Esophagus muscularis mucosa (tissue), 4 donors: ENCODE measurements at regions of chr17 and their contacts with region 1.

Region 1: GRCh38 chr17:9522074-9522473 is 53.5 kb downstream of the STX8 start:
- DNase-seq: no peak
- H3K4me3 ChIP-seq: no peak overlapping the region
- H3K27ac ChIP-seq: no peak overlapping the region
- H3K4me1 ChIP-seq: peaks cover 0 to 34% (median 30%) of the 10 kb centered on the region in 4 donors
- H3K27me3 ChIP-seq: no peaks in the 10 kb centered on the region
- CTCF ChIP-seq: peak; percentile 56 to 67 (median 61)
- EP300 ChIP-seq: no peak
- POLR2A ChIP-seq: no peak

Region 2: DNA sequence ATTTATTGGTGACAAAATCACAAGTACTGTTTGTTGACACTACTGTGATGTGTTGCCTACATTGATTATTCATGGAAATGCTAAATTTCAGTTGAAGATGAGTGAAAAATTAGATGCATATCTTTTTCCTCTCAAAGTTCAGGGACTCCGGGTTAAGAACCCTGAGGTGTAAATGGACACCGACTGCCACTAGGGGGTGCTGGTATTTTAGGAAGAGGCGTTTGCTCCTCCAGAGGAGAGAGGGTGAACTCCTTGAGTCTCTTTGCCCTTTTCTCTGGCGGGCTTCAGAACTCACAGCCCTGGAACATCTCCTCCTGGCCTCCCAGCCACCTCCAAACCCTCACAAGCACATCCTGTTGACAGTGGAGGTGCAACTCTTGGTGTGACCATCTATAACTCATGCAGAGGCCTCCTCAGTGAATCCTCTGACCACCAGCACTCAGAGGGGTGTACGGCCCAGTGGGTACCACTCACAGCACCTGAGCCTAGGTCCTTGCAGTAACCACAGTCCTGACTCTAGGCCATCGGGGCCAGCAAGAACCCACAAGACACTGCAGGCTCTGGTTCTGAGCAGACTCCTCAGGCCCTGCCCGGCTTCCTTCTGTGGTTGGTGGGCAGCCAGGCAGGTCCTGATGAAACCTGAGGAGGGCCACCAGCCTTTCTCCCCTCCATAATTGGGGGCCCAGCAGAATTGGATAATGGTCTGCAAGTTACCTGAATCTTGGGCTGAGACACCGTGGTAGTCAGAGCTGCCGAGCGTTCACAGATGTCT is 530.4 kb before region 1 on chr17:
- intact Hi-C with region 1: loop called (anchors 2 kb)
- DNase-seq: no peak
- H3K4me3 ChIP-seq: no peak overlapping the region
- H3K27ac ChIP-seq: no peak overlapping the region
- H3K4me1 ChIP-seq: peaks cover 0 to 7% (median 5%) of the 10 kb centered on the region in 4 donors
- H3K27me3 ChIP-seq: no peaks in the 10 kb centered on the region
- CTCF ChIP-seq: peak; percentile 85 to 87 (median 86)
- EP300 ChIP-seq: no peak
- POLR2A ChIP-seq: no peak

Region 3: GRCh38 chr17:9291912-9292560 is 230.0 kb before region 1 on chr17:
- intact Hi-C with region 1: loop called (anchors 10 kb)
- DNase-seq: no peak
- H3K4me3 ChIP-seq: no peak overlapping the region
- H3K27ac ChIP-seq: peak overlapping the region; percentile 76 to 80 (median 78)
- H3K4me1 ChIP-seq: peaks cover 11 to 51% (median 47%) of the 10 kb centered on the region in 4 donors
- H3K27me3 ChIP-seq: no peaks in the 10 kb centered on the region
- CTCF ChIP-seq: peak; percentile 82 to 88 (median 87)
- EP300 ChIP-seq: no peak
- POLR2A ChIP-seq: no peak